Common myeloid progenitor, CD34-positive (primary cell): ENCODE measurements at regions of chr1 and their contacts with region 1.

Region 1: DNA sequence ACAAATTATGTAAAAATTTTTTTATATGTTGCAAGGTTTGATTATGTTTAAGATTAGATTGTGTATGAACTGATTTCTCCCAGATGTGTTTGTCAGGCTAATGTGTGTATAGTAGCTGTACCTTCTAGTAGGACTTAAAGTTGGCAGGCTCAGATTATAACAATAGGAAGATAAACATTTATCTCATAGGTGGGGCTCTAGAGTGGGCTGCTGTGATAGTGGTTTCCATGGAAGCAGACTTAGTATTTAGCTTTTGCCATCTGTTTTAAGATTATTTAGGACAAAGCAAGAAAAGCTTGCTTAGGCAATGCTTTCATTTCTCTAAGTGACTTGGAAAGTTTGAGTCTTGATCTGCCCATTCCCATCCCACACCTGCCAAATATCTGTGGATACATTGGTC is 187.7 kb upstream of the CACYBP start:
- DNase-seq: no peak
- H3K4me3 ChIP-seq: no peak overlapping the region
- H3K27ac ChIP-seq: no peak overlapping the region
- H3K4me1 ChIP-seq: peaks cover 0 to 2% (median 0%) of the 10 kb centered on the region in 4 experiments
- H3K27me3 ChIP-seq: no peaks in the 10 kb centered on the region

Region 2: GRCh38 chr1:174800216-174800851 is 11.7 kb before region 1 on chr1:
- CTCF ChIA-PET with region 1: interaction called, 14 read pairs
- POLR2A ChIA-PET with region 1: no interaction called
- DNase-seq: peak in 1 of 3 donors; percentile 6
- H3K4me3 ChIP-seq: peak overlapping the region; percentile 37 to 94 (median 77)
- H3K27ac ChIP-seq: peak overlapping the region; percentile 53 to 77
- H3K4me1 ChIP-seq: peaks cover 4 to 23% (median 11%) of the 10 kb centered on the region in 4 experiments
- H3K27me3 ChIP-seq: no peaks in the 10 kb centered on the region